GM13977 (cell line): ENCODE measurements at regions of chr4 and their contacts with region 1.

Region 1: GRCh38 chr4:108834835-108835384 is 72.1 kb upstream of the ETNPPL start:
- DNase-seq: peak; percentile 3
- CTCF ChIP-seq: peak; percentile 43

Region 2: DNA sequence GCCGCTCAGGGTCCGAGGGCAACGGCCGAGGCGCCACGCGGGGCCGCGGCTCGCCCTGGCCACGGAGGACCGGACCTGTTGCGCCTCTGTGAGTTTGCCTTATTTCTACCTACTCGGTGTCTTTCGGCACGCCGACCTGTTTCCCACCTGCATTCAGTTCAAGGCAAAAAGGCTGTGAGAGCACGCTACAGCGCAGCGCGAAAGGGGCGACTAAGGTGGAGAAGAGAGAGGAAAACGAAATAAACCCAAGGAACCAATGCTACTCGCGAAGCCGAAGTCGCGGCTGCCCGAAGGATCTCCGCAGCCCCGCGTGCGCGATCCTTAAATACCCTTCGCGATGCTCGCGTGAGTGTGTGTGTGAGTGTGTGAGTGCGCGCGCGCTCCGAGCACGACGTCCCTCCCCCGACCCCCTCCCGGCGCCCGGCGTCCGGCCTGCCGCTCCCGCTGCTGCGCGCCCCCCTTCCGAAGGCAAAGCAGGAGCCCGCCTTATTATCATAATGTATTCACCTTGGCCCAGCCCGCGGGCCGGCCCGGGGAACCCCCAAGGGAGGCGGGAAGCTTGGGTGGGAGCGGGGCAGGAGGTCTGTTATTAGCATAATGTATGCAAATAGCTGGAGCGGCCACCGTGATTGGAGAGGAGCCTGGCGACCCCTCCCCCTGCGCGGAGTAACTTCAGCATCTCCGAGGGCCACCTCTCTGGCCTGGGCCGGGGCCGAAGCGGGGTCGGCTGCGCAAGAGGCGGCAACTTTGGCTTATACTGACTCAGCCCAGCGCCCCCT is 467.6 kb after region 1 on chr4 and contains the start of gene COL25A1:
- in situ Hi-C with region 1: loop called (anchors 25 kb)
- DNase-seq: peak; percentile 40
- CTCF ChIP-seq: no peak

Region 3: GRCh38 chr4:109406338-109406931 is 571.5 kb after region 1 on chr4:
- in situ Hi-C with region 1: loop called (anchors 25 kb)
- DNase-seq: peak; percentile 56
- CTCF ChIP-seq: peak; percentile 80